GM12878 (cell line): ENCODE measurements at regions of chr20 and their contacts with region 1.

Region 1: DNA sequence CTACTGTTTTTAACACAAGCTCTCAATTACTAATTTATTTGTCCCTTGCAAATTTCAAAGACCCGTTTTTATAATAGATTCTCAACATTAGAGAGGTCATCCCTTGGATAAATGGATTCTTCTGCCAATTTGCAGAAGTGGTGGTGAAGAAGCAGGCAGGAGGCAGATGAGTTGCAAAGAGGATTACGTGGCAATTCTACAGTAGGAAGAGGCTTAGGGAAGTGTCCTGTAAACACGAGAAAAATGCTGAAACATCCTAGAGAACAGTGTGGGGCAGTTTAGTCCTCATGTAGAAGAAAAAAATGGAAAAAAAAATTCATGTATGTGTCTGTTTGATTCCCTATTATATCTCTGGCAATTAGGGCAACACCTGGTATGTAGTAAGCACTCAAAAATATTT is 87.6 kb downstream of the BMP2 start:
- DNase-seq: no peak
- ATAC-seq: no peak; the same call in 2 of the 3 replicates
- H3K4me3 ChIP-seq: no peak overlapping the region
- H3K27ac ChIP-seq: no peak overlapping the region
- H3K4me1 ChIP-seq: no peaks in the 10 kb centered on the region
- H3K27me3 ChIP-seq: no peaks in the 10 kb centered on the region
- CTCF ChIP-seq: no peak
- EP300 ChIP-seq: no peak
- POLR2A ChIP-seq: no peak
- RAD21 ChIP-seq: no peak

Region 2: DNA sequence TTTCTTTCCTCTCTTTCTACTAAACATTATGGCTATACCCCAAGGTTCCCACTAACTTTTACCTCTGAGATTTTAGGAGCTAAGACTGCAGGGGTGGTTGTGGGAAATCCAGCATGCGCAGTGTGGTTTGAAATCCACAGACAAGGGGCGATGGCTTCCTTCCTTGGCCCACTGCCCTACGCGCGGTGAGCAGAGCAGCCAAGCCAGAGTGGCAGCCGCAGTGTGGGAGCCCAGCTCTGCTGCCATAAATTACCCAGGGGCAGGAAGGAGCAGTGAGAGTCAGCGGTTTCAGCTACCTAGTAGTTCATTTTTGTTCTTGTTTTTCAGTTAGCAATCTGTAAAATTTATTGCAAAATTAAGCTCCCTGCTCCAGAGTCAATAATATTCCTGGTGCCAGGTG is 13.8 kb after region 1 on chr20:
- CTCF ChIA-PET with region 1: interaction called, 77 read pairs
- POLR2A ChIA-PET with region 1: interaction called, 59 read pairs
- RAD21 ChIA-PET with region 1: interaction called, 75 read pairs
- SMC1A ChIA-PET with region 1: interaction called, 139 read pairs
- in situ Hi-C with region 1: no loop called
- intact Hi-C with region 1: no loop called
- DNase-seq: no peak
- ATAC-seq: peak; percentile 68
- H3K4me3 ChIP-seq: no peak overlapping the region
- H3K27ac ChIP-seq: no peak overlapping the region
- H3K4me1 ChIP-seq: no peaks in the 10 kb centered on the region
- H3K27me3 ChIP-seq: no peaks in the 10 kb centered on the region; a peak in 1 of 4 replicates
- CTCF ChIP-seq: no peak
- EP300 ChIP-seq: no peak
- POLR2A ChIP-seq: no peak
- RAD21 ChIP-seq: no peak

Region 3: DNA sequence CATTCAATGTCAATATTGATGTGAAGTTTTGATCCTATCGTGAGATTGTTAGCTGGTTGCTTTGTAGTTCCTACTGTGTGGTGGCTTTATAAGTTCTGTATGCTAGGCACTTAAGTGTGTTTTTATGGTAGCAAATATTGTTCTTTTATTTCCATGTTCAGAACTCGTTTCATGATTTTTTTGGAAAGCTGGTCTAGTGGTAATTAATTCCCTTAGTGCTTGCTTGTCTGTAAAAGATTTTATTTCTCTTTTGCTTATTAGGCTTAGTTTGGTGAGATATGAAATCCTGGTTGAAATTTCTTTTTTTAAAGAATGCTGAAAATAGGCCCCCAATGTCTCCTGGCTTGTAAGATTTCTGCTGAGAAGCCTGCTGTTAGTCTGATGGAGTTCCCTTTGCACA is 1249.1 kb after region 1 on chr20:
- CTCF ChIA-PET with region 1: no interaction called
- POLR2A ChIA-PET with region 1: no interaction called
- RAD21 ChIA-PET with region 1: no interaction called
- SMC1A ChIA-PET with region 1: no interaction called
- in situ Hi-C with region 1: no loop called
- intact Hi-C with region 1: no loop called
- DNase-seq: no peak
- ATAC-seq: no peak
- H3K4me3 ChIP-seq: no peak overlapping the region
- H3K27ac ChIP-seq: no peak overlapping the region
- H3K4me1 ChIP-seq: no peaks in the 10 kb centered on the region
- H3K27me3 ChIP-seq: no peaks in the 10 kb centered on the region
- CTCF ChIP-seq: no peak
- EP300 ChIP-seq: no peak
- POLR2A ChIP-seq: no peak
- RAD21 ChIP-seq: no peak